ENCODE measurements at regions of chrX and their contacts with region 1.

Region 1: GRCh38 chrX:136220535-136220934 is 30.7 kb downstream of the MAP7D3 start:
- DNase-seq: no peak
- H3K4me3 ChIP-seq: no peak overlapping the region
- H3K27ac ChIP-seq: peak overlapping the region; percentile 64
- H3K4me1 ChIP-seq: peaks cover 14% of the 10 kb centered on the region
- H3K27me3 ChIP-seq: no peaks in the 10 kb centered on the region
- CTCF ChIP-seq: no peak
- POLR2A ChIP-seq: no peak

Region 2: DNA sequence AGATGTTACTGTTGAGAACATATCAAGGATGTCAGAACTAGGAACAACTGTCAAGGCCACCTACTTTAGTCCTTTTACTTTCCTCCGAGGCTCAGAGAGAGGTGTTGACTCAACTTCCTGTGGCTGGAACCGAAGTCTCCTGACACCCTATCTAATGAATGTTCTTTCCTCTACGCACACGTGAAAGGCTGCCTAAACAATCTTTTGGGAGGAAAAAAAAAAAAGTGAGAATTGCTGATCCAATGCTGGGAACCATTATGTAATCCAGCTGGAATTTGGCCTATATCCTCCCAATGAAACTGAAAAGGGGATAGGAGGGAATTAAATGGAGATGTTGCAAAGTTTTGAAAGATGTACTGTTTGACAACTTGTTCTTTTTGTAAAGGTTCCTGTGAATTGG is 39.0 kb after region 1 on chrX:
- CTCF ChIA-PET with region 1: no interaction called
- POLR2A ChIA-PET with region 1: no interaction called
- dilution Hi-C with region 1: no loop called
- intact Hi-C with region 1: loop called (anchors 2 kb)
- DNase-seq: peak; percentile 80
- H3K4me3 ChIP-seq: no peak overlapping the region
- H3K27ac ChIP-seq: peak overlapping the region; percentile 96
- H3K4me1 ChIP-seq: peaks cover 34% of the 10 kb centered on the region
- H3K27me3 ChIP-seq: no peaks in the 10 kb centered on the region
- CTCF ChIP-seq: no peak
- POLR2A ChIP-seq: no peak